ENCODE measurements at regions of chr11 and their contacts with region 1.

Region 1: GRCh38 chr11:19742588-19743292 is 30.1 kb downstream of the NAV2 start:
- DNase-seq: peak; percentile 72 to 87
- ATAC-seq: peak; percentile 92 to 98 (median 94)
- H3K4me3 ChIP-seq: no peak overlapping the region
- H3K27ac ChIP-seq: no peak overlapping the region
- H3K4me1 ChIP-seq: no peaks in the 10 kb centered on the region
- H3K27me3 ChIP-seq: no peaks in the 10 kb centered on the region
- CTCF ChIP-seq: peak; percentile 96

Region 2: GRCh38 chr11:19071255-19071654 is 671.5 kb before region 1 on chr11:
- intact Hi-C with region 1: loop called in 1 of 2 experiments (anchors 10 kb)
- DNase-seq: peak; percentile 65 to 77
- ATAC-seq: peak; percentile 88 to 97 (median 94)
- H3K4me3 ChIP-seq: no peak overlapping the region
- H3K27ac ChIP-seq: no peak overlapping the region
- H3K4me1 ChIP-seq: no peaks in the 10 kb centered on the region
- H3K27me3 ChIP-seq: no peaks in the 10 kb centered on the region
- CTCF ChIP-seq: peak; percentile 90

Region 3: DNA sequence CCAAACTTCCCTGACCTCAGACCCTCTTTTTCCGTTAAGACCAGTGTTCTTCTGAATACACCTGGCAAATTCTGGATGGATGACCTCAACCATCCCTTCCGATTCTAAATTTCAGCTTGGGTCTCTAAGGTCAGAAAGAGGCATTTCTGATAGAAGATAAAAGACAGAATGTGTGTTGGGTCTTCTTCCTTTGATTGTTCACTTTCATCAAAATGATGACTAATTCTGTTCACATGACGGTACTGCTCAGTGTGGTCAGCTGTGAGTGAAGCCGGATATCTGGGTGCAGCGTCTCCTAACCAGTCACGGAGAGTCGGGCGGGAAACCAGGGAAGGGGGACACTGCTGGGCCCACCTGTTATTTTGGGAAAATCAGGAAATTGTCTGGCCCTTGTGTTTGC is 181.7 kb before region 1 on chr11:
- intact Hi-C with region 1: loop called (anchors 1 to 2 kb)
- DNase-seq: no peak
- ATAC-seq: no peak
- H3K4me3 ChIP-seq: no peak overlapping the region
- H3K27ac ChIP-seq: no peak overlapping the region
- H3K4me1 ChIP-seq: no peaks in the 10 kb centered on the region
- H3K27me3 ChIP-seq: no peaks in the 10 kb centered on the region
- CTCF ChIP-seq: no peak

Region 4: DNA sequence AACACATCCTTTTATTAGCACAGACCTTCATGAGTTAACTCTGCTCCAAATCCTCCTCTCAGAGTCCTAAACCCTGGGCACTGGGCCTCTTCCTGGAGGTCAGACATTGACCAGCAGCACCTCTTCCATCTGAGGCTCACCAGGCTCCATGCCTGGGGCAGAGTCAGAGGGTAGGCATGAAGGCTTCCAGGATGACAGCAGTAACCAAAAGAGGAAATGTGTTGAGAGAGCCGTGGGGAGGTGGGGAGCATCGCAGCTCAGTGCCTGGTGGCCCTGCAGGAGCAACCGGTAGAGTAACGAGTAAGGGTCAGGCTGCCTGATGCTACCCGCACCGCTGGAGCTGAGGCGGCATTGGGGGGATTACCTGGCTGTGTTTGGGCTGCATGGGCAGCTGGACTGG is 39.5 kb before region 1 on chr11:
- intact Hi-C with region 1: no loop called
- DNase-seq: no peak
- ATAC-seq: no peak
- H3K4me3 ChIP-seq: no peak overlapping the region
- H3K27ac ChIP-seq: no peak overlapping the region
- H3K4me1 ChIP-seq: peaks cover 4% of the 10 kb centered on the region
- H3K27me3 ChIP-seq: no peaks in the 10 kb centered on the region
- CTCF ChIP-seq: no peak

Region 5: GRCh38 chr11:19903620-19904069 is 160.9 kb after region 1 on chr11:
- intact Hi-C with region 1: loop called (anchors 2 to 5 kb)
- DNase-seq: peak; percentile 50 to 72
- ATAC-seq: peak; percentile 82 to 94 (median 84)
- H3K4me3 ChIP-seq: no peak overlapping the region
- H3K27ac ChIP-seq: no peak overlapping the region
- H3K4me1 ChIP-seq: no peaks in the 10 kb centered on the region
- H3K27me3 ChIP-seq: no peaks in the 10 kb centered on the region
- CTCF ChIP-seq: peak; percentile 87

Measured in psoas muscle (tissue), 8 donors.